ENCODE measurements at regions of chr4 and their contacts with region 1.

Region 1: GRCh38 chr4:173301518-173302201 is 32.5 kb downstream of the HMGB2 start:
- DNase-seq: peak in 5 of 9 donors; percentile 16 to 39 (median 27)
- ATAC-seq: peak; percentile 51
- H3K4me3 ChIP-seq: no peak overlapping the region
- H3K4me3 Mint-ChIP-seq: no peak overlapping the region
- H3K27ac ChIP-seq: no peak overlapping the region
- H3K27ac Mint-ChIP-seq: peak overlapping the region in 1 of 9 donors; percentile 43
- H3K4me1 ChIP-seq: no peaks in the 10 kb centered on the region
- H3K4me1 Mint-ChIP-seq: peaks cover 0 to 9% (median 0%) of the 10 kb centered on the region in 7 donors
- H3K27me3 ChIP-seq: no peaks in the 10 kb centered on the region
- H3K27me3 Mint-ChIP-seq: no peaks in the 10 kb centered on the region

Region 2: GRCh38 chr4:172337611-172338010 is 964.0 kb before region 1 on chr4:
- CTCF ChIA-PET with region 1: no interaction called
- POLR2A ChIA-PET with region 1: no interaction called
- intact Hi-C with region 1: no loop called
- DNase-seq: no peak
- ATAC-seq: no peak
- H3K4me3 ChIP-seq: no peak overlapping the region
- H3K4me3 Mint-ChIP-seq: no peak overlapping the region
- H3K27ac ChIP-seq: no peak overlapping the region
- H3K27ac Mint-ChIP-seq: no peak overlapping the region
- H3K4me1 ChIP-seq: no peaks in the 10 kb centered on the region
- H3K4me1 Mint-ChIP-seq: no peaks in the 10 kb centered on the region
- H3K27me3 ChIP-seq: no peaks in the 10 kb centered on the region
- H3K27me3 Mint-ChIP-seq: no peaks in the 10 kb centered on the region

Region 3: GRCh38 chr4:173025131-173025530 is 276.5 kb before region 1 on chr4:
- CTCF ChIA-PET with region 1: interaction called, 5 read pairs
- POLR2A ChIA-PET with region 1: interaction called, 3 read pairs
- intact Hi-C with region 1: loop called (anchors 1 kb)
- DNase-seq: peak in 7 of 9 donors; percentile 10 to 50 (median 42)
- ATAC-seq: peak; percentile 67
- H3K4me3 ChIP-seq: no peak overlapping the region
- H3K4me3 Mint-ChIP-seq: no peak overlapping the region
- H3K27ac ChIP-seq: no peak overlapping the region
- H3K27ac Mint-ChIP-seq: no peak overlapping the region
- H3K4me1 ChIP-seq: no peaks in the 10 kb centered on the region
- H3K4me1 Mint-ChIP-seq: peaks cover 0 to 4% (median 0%) of the 10 kb centered on the region in 7 donors
- H3K27me3 ChIP-seq: no peaks in the 10 kb centered on the region
- H3K27me3 Mint-ChIP-seq: peaks cover 0 to 7% (median 5%) of the 10 kb centered on the region in 5 donors

Region 4: GRCh38 chr4:173192375-173193162 is 109.1 kb before region 1 on chr4:
- CTCF ChIA-PET with region 1: no interaction called
- POLR2A ChIA-PET with region 1: no interaction called
- intact Hi-C with region 1: loop called in 1 of 2 experiments (anchors 1 kb)
- DNase-seq: peak in 1 of 9 donors; percentile 7
- ATAC-seq: no peak
- H3K4me3 ChIP-seq: no peak overlapping the region
- H3K4me3 Mint-ChIP-seq: no peak overlapping the region
- H3K27ac ChIP-seq: no peak overlapping the region
- H3K27ac Mint-ChIP-seq: peak overlapping the region in 1 of 9 donors; percentile 17
- H3K4me1 ChIP-seq: peaks cover 0 to 5% of the 10 kb centered on the region in 2 donors
- H3K4me1 Mint-ChIP-seq: peaks cover 21 to 64% (median 46%) of the 10 kb centered on the region in 7 donors
- H3K27me3 ChIP-seq: no peaks in the 10 kb centered on the region
- H3K27me3 Mint-ChIP-seq: no peaks in the 10 kb centered on the region

Region 5: DNA sequence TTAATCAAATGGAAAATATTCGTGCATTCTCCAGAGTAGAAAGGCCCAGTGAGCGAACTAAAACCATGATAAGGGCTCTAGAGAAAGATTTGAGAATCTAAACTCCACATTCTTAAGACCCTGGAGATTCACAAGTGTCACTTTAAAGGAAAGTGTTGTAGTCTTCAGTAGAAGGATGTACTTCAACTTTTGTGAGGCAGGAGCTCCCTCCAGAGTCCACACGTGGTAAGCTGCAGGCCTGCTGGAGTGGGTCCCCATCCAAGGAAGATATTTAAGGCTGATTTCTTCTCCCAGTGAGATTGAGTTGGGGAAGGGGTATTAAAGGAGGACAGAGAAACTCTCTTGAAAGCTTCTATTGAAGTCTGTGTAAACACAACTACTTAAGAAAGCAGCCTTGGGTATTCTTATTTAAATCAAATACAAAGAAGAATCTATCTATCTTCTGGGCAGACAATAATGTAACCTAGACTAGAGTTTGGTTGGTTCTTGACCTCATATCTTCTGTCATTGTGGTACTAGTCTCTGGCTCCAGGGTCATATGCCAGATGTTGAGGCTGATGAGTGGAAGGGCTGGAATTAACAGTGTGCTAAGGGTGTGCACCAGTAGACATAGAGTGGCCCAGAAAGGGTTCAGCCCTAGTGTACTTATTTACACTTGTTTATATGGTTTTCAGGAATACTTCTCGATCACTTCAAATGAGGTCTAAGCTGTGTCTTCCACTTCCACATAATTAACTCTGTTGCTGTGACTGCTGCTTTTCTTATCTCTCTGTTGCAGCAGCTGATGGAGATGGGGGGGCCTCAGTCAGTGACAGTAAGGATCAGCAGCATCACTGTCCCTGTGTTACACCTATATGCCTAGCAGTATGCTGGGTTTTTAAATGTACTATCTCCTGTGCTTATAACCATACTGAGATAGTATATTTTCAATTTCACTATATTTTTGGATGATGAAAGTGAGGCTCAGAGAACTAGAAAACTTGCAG is 43.6 kb before region 1 on chr4:
- CTCF ChIA-PET with region 1: interaction called, 7 read pairs
- POLR2A ChIA-PET with region 1: interaction called, 4 read pairs
- intact Hi-C with region 1: loop called in 1 of 2 experiments (anchors 5 kb)
- DNase-seq: peak in 8 of 9 donors; percentile 26 to 62 (median 48)
- ATAC-seq: peak; percentile 83
- H3K4me3 ChIP-seq: no peak overlapping the region
- H3K4me3 Mint-ChIP-seq: no peak overlapping the region
- H3K27ac ChIP-seq: no peak overlapping the region
- H3K27ac Mint-ChIP-seq: no peak overlapping the region
- H3K4me1 ChIP-seq: no peaks in the 10 kb centered on the region
- H3K4me1 Mint-ChIP-seq: peaks cover 0 to 12% (median 5%) of the 10 kb centered on the region in 7 donors
- H3K27me3 ChIP-seq: no peaks in the 10 kb centered on the region
- H3K27me3 Mint-ChIP-seq: no peaks in the 10 kb centered on the region

Region 6: GRCh38 chr4:173288296-173288695 is 13.4 kb before region 1 on chr4:
- CTCF ChIA-PET with region 1: interaction called, 17 read pairs
- POLR2A ChIA-PET with region 1: no interaction called
- intact Hi-C with region 1: loop called in 1 of 2 experiments (anchors 1 kb)
- DNase-seq: peak; percentile 22 to 68 (median 44)
- ATAC-seq: peak; percentile 63
- H3K4me3 ChIP-seq: no peak overlapping the region
- H3K4me3 Mint-ChIP-seq: peak overlapping the region in 7 of 10 donors; percentile 15 to 83 (median 55)
- H3K27ac ChIP-seq: no peak overlapping the region
- H3K27ac Mint-ChIP-seq: peak overlapping the region in 5 of 9 donors; percentile 5 to 81 (median 23)
- H3K4me1 ChIP-seq: peaks cover 0 to 6% of the 10 kb centered on the region in 2 donors
- H3K4me1 Mint-ChIP-seq: peaks cover 9 to 22% (median 16%) of the 10 kb centered on the region in 7 donors
- H3K27me3 ChIP-seq: no peaks in the 10 kb centered on the region
- H3K27me3 Mint-ChIP-seq: no peaks in the 10 kb centered on the region

Region 7: GRCh38 chr4:173334085-173334772 is 32.6 kb after region 1 on chr4 and contains the start of gene HMGB2:
- CTCF ChIA-PET with region 1: no interaction called
- POLR2A ChIA-PET with region 1: no interaction called
- intact Hi-C with region 1: no loop called
- DNase-seq: peak; percentile 96 to 100 (median 100)
- ATAC-seq: peak; percentile 97
- H3K4me3 ChIP-seq: peak within 1 kb of the TSS; percentile 89
- H3K4me3 Mint-ChIP-seq: peak within 1 kb of the TSS; percentile 93 to 100 (median 99)
- H3K27ac ChIP-seq: peak within 1 kb of the TSS; percentile 98
- H3K27ac Mint-ChIP-seq: peak within 1 kb of the TSS; percentile 97 to 100 (median 99)
- H3K4me1 ChIP-seq: peaks cover 7 to 18% of the 10 kb centered on the region in 2 donors
- H3K4me1 Mint-ChIP-seq: peaks cover 20 to 55% (median 30%) of the 10 kb centered on the region in 7 donors
- H3K27me3 ChIP-seq: no peaks in the 10 kb centered on the region
- H3K27me3 Mint-ChIP-seq: peaks cover 6 to 18% (median 11%) of the 10 kb centered on the region in 5 donors
- total RNA-seq, gene HMGB2: 89.3 to 542 (median 106) TPM